Mammary epithelial cell (primary cell): ENCODE measurements at regions of chr17 and their contacts with region 1.

Region 1: GRCh38 chr17:55053855-55054254 is 85.3 kb downstream of the STXBP4 start:
- DNase-seq: no peak
- H3K4me3 ChIP-seq: no peak overlapping the region
- H3K27ac ChIP-seq: no peak overlapping the region
- H3K4me1 ChIP-seq: no peaks in the 10 kb centered on the region
- H3K27me3 ChIP-seq: no peaks in the 10 kb centered on the region
- CTCF ChIP-seq: peak; percentile 36 to 54

Region 2: DNA sequence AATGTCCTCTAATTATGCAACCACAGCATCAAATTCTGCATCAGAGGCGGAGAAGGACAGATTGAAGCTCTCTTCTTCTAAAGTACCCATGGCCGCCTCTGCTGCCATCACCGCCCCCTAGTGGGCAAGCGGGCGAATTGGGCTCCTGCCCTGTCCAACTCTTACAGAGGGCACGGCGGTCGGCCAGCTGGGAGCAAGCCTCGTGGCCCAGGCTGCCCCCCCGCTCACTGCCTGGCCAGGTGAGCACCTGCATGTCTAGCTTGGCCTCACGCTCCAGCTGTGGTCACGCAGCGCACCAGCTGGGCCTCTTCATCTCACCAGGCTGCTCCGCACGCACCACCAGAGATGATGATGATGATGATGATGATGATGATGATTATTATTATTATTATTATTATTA is 299.3 kb before region 1 on chr17:
- CTCF ChIA-PET with region 1: no interaction called
- dilution Hi-C with region 1: no loop called
- in situ Hi-C with region 1: no loop called
- intact Hi-C with region 1: no loop called
- DNase-seq: no peak
- H3K4me3 ChIP-seq: no peak overlapping the region
- H3K27ac ChIP-seq: no peak overlapping the region
- H3K4me1 ChIP-seq: no peaks in the 10 kb centered on the region
- H3K27me3 ChIP-seq: peaks cover 2% of the 10 kb centered on the region
- CTCF ChIP-seq: peak in 1 of 2 donors; percentile 14

Region 3: GRCh38 chr17:54867634-54868033 is 186.2 kb before region 1 on chr17:
- CTCF ChIA-PET with region 1: no interaction called
- dilution Hi-C with region 1: no loop called
- in situ Hi-C with region 1: no loop called
- intact Hi-C with region 1: no loop called
- DNase-seq: peak; percentile 22
- H3K4me3 ChIP-seq: no peak overlapping the region
- H3K27ac ChIP-seq: no peak overlapping the region
- H3K4me1 ChIP-seq: no peaks in the 10 kb centered on the region
- H3K27me3 ChIP-seq: no peaks in the 10 kb centered on the region
- CTCF ChIP-seq: no peak

Region 4: DNA sequence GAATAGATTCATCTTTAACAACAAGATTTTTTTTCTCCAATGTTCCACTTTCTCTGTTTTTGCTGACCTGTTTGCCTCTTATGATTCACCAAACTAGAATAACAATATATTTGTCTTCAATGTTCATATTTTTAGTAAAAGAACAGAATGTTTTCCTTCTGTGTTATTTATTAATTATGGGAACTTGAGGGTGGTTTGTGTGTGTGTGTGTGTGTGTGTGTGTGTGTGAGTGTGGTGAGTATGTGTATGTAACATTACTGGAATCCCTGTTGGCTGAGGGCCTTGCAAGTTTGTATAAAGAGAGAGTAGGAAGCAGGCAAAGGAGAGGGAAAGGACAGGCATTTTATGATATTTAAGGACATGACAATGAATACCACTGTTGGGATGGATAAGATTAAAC is 71.5 kb before region 1 on chr17:
- CTCF ChIA-PET with region 1: no interaction called
- dilution Hi-C with region 1: no loop called
- in situ Hi-C with region 1: no loop called
- intact Hi-C with region 1: no loop called
- DNase-seq: no peak
- H3K4me3 ChIP-seq: no peak overlapping the region
- H3K27ac ChIP-seq: no peak overlapping the region
- H3K4me1 ChIP-seq: peaks cover 8% of the 10 kb centered on the region
- H3K27me3 ChIP-seq: no peaks in the 10 kb centered on the region
- CTCF ChIP-seq: no peak

Region 5: DNA sequence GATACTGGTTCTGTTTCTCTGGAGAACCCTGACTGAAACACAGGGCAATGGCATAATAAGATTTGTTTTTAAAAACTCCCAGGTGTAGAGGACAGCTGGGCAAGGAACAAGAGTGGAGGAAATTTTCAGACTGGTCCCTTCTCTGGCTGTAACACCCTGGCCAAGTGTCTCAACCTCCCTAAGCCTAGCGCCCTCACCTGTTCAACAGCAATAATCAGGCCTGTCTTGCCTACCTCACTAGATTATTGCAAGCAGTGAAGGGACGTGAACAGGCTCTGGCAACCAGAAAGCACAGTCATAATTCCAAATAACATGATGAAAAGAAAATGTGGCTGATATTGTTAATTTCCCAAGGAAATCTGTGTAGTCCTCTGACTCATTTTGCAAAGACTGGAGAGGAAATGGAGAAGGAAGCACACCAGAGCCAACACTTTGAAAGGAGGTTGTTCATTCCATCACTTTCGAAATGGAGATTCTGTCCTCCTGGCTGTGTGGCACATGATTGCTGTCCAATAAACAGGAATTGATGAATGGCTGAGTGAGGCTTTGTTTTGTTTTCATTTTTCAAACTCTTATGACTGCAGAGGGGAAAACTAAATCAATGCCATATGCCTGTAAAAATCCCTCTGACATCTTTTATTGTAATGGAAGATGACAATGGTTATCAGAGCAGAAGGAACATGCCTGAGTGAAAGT is 123.5 kb after region 1 on chr17:
- CTCF ChIA-PET with region 1: no interaction called
- dilution Hi-C with region 1: no loop called
- in situ Hi-C with region 1: no loop called
- intact Hi-C with region 1: loop called (anchors 10 kb)
- DNase-seq: no peak
- H3K4me3 ChIP-seq: no peak overlapping the region
- H3K27ac ChIP-seq: no peak overlapping the region
- H3K4me1 ChIP-seq: peaks cover 10% of the 10 kb centered on the region
- H3K27me3 ChIP-seq: no peaks in the 10 kb centered on the region
- CTCF ChIP-seq: peak in 1 of 2 donors; percentile 20

Region 6: DNA sequence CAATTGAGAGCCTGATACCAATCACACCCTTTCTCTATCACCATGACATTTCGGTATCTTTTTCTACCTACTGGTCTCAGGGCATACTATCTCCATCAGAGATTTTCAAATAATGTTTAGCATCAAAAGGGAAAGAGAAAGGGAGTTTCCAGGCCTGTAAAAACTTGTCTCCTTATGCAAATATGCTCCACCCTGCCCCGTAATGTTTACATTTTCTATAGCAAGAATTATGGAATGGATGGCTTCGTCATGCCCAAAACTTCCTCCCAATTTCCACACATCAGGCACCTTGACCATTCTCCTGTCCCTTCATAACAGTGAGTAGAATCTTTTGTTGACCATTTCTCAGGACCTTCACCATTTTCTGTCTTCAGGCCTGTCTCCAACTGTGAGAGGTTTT is 180.0 kb after region 1 on chr17:
- CTCF ChIA-PET with region 1: no interaction called
- dilution Hi-C with region 1: no loop called
- in situ Hi-C with region 1: no loop called
- intact Hi-C with region 1: no loop called
- DNase-seq: peak; percentile 20
- H3K4me3 ChIP-seq: no peak overlapping the region
- H3K27ac ChIP-seq: no peak overlapping the region
- H3K4me1 ChIP-seq: peaks cover 4% of the 10 kb centered on the region
- H3K27me3 ChIP-seq: no peaks in the 10 kb centered on the region
- CTCF ChIP-seq: no peak

Region 7: DNA sequence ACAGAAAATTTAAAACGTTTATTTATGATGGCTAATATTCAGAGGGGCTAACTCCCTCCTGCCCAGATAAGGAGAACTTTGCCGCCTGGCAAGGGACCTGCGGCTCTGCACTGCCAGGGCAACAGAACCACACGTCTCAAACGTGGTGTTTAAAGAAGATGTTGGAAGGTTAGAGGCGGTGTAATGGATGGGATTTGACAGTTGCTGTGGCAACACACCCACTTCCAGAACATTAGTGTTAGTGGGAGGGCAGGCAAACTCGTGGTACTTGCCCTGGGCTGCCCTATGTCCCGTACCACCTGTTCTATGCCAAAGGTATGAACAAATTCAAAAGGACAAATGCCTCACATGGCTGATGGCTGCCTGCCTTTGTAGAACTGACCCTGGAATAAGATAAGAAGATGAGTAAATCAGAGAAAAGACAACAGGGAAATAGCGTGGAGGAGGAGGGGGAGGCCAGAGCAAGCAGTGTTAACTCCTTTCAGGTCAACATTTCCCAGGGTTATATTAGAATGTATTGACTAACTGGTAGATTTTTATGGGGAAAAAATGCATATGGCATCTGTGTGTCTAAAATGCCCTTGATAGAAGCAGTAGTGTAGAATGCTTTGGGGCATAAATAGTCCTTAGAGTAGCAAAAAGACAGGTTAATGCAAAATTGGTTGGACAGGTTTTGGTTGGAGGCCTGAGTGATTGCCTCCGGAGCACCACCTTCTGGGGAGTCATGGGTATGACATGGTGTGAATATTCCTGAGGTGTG is 241.7 kb after region 1 on chr17:
- CTCF ChIA-PET with region 1: no interaction called
- dilution Hi-C with region 1: no loop called
- in situ Hi-C with region 1: loop called (anchors 10 to 25 kb)
- intact Hi-C with region 1: loop called (anchors 1 kb)
- DNase-seq: peak; percentile 51
- H3K4me3 ChIP-seq: no peak overlapping the region
- H3K27ac ChIP-seq: no peak overlapping the region
- H3K4me1 ChIP-seq: no peaks in the 10 kb centered on the region
- H3K27me3 ChIP-seq: no peaks in the 10 kb centered on the region
- CTCF ChIP-seq: peak; percentile 86 to 91

Region 8: GRCh38 chr17:55348749-55349354 is 295.0 kb after region 1 on chr17:
- CTCF ChIA-PET with region 1: interaction called, 3 read pairs
- dilution Hi-C with region 1: no loop called
- in situ Hi-C with region 1: no loop called
- intact Hi-C with region 1: loop called (anchors 1 kb)
- DNase-seq: peak; percentile 38
- H3K4me3 ChIP-seq: no peak overlapping the region
- H3K27ac ChIP-seq: no peak overlapping the region
- H3K4me1 ChIP-seq: no peaks in the 10 kb centered on the region
- H3K27me3 ChIP-seq: no peaks in the 10 kb centered on the region
- CTCF ChIP-seq: peak; percentile 81 to 89

Region 9: GRCh38 chr17:55513885-55514591 is 460.2 kb after region 1 on chr17:
- CTCF ChIA-PET with region 1: no interaction called
- dilution Hi-C with region 1: no loop called
- in situ Hi-C with region 1: no loop called
- intact Hi-C with region 1: loop called (anchors 5 kb)
- DNase-seq: peak; percentile 60
- H3K4me3 ChIP-seq: no peak overlapping the region
- H3K27ac ChIP-seq: no peak overlapping the region
- H3K4me1 ChIP-seq: no peaks in the 10 kb centered on the region
- H3K27me3 ChIP-seq: no peaks in the 10 kb centered on the region
- CTCF ChIP-seq: peak; percentile 94 to 96